Panc1 (cell line): ENCODE measurements at regions of chr19 and their contacts with region 1.

Region 1: DNA sequence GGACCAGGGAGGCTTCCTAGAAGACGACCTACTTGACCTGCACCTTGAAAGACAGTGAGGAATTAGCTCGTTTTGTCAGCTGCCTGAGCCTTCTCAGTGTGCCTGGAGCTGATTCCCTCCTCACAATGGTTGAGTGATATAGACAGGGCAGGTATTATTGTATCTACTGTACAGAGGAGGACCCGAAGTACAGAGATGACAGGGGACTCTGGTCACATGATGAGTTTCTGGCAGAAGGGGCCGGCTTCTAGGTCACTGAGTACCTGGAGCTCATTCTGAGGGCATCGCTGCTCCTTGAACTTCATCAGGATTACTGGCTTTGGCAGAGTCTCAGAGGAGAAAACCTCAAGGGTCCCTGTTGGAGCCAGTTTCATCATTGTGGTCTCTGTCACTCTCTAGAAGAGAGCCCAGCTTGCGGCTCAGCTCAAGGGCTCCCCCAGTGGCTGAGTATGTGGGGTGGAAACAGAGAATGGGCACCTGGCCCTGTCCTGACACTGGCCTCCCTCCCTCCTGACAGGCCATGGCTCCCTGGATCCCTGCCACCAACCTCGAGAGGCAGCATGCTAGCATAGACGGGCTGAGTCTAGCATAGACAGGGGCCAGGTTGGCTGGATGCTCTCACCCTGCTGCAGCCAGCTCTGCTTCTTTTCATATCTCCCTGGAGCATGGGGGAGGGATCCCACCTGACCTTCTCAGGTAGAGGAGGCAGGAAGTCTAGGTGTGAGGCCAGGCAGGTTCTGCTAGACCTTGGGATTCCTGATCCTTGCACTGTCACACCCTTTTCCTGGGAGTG is 38.7 kb downstream of the NFIX start:
- DNase-seq: no peak
- ATAC-seq: peak; percentile 79
- H3K4me3 ChIP-seq: no peak overlapping the region
- H3K27ac ChIP-seq: peak overlapping the region; percentile 75
- H3K4me1 ChIP-seq: peaks cover 99% of the 10 kb centered on the region
- H3K27me3 ChIP-seq: no peaks in the 10 kb centered on the region
- CTCF ChIP-seq: peak; percentile 85

Region 2: GRCh38 chr19:12983542-12984142 is 50.4 kb before region 1 on chr19:
- CTCF ChIA-PET with region 1: interaction called, 3 read pairs
- POLR2A ChIA-PET with region 1: no interaction called
- in situ Hi-C with region 1: no loop called
- intact Hi-C with region 1: loop called (anchors 10 kb)
- DNase-seq: peak; percentile 12
- ATAC-seq: peak; percentile 83
- H3K4me3 ChIP-seq: peak overlapping the region; percentile 36 to 51
- H3K27ac ChIP-seq: peak overlapping the region; percentile 69; the same call in 1 of the 2 replicates
- H3K4me1 ChIP-seq: peaks cover 12% of the 10 kb centered on the region
- H3K27me3 ChIP-seq: no peaks in the 10 kb centered on the region
- CTCF ChIP-seq: peak; percentile 93

Region 3: DNA sequence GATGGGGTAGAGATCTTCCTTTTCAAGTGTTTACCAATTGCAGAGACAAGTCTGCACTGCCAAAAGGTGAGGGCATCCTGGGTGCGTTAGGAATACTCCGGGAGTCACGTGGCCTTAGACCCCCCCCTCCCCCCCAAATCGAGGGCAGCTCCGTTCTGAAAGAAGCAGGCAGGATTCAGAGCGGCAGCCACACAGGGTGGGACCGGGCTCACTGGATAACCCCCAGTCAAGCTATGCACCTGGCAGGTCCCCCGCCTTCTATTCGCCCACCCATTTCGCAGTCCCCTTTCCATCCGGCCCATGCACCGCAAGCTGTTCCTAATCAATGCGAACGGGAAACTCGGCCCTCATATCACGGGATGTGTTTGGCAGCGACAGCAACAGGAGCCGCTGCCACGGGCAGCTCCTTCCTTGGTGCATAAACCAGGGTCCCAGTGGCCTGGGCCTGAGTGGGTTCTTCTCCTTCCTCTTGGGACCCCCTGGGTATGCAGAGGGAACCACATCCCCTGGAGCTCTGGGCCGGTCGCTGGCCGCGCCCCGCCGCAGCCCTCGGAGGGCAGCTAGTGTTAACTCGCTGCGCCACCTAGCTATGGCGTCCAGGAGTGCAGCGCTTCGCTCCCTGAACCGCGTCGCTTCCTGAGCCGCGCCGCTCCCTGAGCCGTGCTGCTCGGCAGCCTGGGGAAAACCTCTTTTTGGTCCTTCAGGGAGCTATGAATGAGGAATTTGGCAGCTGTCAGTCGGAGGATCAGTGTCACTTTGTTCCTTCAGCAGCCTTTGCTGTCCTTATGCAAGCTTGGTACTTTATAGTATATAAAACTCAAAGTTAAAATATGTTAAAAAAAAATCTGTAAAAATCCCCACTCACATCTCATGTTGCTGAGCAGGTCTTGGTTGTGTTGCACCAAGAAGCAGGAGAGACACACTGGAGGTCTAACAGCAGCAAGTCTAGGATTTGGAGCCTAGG is 27.2 kb after region 1 on chr19:
- CTCF ChIA-PET with region 1: interaction called, 12 read pairs
- POLR2A ChIA-PET with region 1: interaction called, 3 read pairs
- in situ Hi-C with region 1: no loop called
- intact Hi-C with region 1: no loop called
- DNase-seq: peak; percentile 43
- ATAC-seq: peak; percentile 79
- H3K4me3 ChIP-seq: peak overlapping the region; percentile 13 to 50
- H3K27ac ChIP-seq: peak overlapping the region; percentile 99
- H3K4me1 ChIP-seq: peaks cover 74% of the 10 kb centered on the region
- H3K27me3 ChIP-seq: no peaks in the 10 kb centered on the region
- CTCF ChIP-seq: peak; percentile 90